ENCODE measurements at regions of chr15 and their contacts with region 1.

Region 1: GRCh38 chr15:95291898-95292472 is 1038.5 kb upstream of the NR2F2 start:
- DNase-seq: peak; percentile 68
- H3K4me3 Mint-ChIP-seq: no peak overlapping the region
- H3K27ac Mint-ChIP-seq: no peak overlapping the region
- H3K4me1 Mint-ChIP-seq: peaks cover 23% of the 10 kb centered on the region
- H3K27me3 Mint-ChIP-seq: peaks cover 57% of the 10 kb centered on the region

Region 2: DNA sequence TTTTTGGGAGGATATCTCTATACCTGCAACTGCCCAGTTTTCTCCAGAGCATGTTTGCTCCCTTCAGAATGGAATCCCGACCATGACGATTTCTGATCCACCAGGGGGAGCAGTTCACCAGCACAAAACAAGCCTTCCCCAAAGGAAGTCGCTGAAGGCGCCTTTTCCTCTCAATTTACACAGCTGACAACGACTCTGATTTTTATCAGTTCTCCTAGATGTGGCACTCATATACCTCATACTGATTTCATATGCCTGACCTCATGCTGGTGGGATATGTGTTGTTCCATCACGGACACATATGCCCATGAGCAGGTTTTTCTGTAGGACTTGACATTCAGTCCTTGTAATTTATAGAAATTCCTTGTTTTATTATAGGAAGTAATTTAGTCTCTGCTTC is 32.5 kb before region 1 on chr15:
- intact Hi-C with region 1: loop called (anchors 1 kb)
- DNase-seq: peak; percentile 88
- H3K4me3 Mint-ChIP-seq: no peak overlapping the region
- H3K27ac Mint-ChIP-seq: no peak overlapping the region
- H3K4me1 Mint-ChIP-seq: peaks cover 10% of the 10 kb centered on the region
- H3K27me3 Mint-ChIP-seq: peaks cover 64% of the 10 kb centered on the region

Region 3: DNA sequence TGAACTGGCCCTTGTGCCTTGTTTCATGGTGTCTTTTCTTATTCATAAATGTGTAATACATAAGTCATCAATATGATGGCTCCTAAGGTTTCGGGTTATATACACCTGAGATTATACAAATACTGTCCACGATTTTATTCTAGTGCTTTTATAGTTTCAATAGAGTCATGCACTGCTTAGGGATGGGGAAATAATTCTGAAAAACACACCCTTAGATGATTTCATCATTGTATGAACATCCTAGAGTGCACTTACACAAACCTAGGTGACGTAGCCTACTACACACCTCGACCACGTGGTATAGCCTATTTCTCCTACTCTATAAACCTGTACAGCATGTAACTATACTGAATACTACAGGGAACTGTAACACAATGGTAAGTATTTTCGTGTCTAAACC is 49.7 kb after region 1 on chr15:
- intact Hi-C with region 1: no loop called
- DNase-seq: no peak
- H3K4me3 Mint-ChIP-seq: no peak overlapping the region
- H3K27ac Mint-ChIP-seq: no peak overlapping the region
- H3K4me1 Mint-ChIP-seq: no peaks in the 10 kb centered on the region
- H3K27me3 Mint-ChIP-seq: no peaks in the 10 kb centered on the region